ENCODE measurements at regions of chr15 and their contacts with region 1.

Region 1: GRCh38 chr15:70488002-70488605 is 275.3 kb downstream of the UACA start:
- DNase-seq: peak; percentile 68
- ATAC-seq: no peak
- H3K4me3 Mint-ChIP-seq: no peak overlapping the region
- H3K27ac Mint-ChIP-seq: peak overlapping the region; percentile 35
- H3K4me1 Mint-ChIP-seq: peaks cover 60% of the 10 kb centered on the region
- H3K27me3 Mint-ChIP-seq: no peaks in the 10 kb centered on the region
- CTCF ChIP-seq: peak; percentile 95

Region 2: DNA sequence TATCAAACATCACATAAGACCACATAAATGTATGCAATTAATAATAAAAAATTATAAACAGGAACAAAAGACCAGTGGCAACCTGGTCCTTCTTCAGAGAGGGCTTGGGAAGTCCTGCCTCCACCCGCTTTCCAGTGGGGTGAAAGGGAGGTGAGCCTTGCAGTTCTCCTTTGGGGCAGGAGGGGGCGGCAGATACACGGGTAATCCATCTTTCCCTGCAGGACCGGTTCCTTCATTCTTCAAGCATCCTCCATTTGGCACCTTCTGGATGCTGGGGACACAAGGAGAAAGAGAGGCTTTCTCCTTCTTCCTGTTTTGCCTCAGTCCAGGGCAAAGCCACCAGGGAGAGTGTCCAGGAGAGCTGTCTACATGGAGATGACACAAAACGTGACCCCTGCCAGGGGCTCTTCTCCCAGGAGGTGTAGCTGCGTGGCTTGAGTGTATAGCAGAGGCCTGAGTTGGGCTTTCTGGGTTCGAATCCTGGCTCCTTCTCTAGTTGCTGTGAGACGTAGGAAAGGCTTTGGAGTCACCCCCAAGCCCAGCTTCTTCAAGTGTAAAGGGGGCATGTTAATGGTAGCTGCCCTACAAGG is 1012.2 kb before region 1 on chr15:
- CTCF ChIA-PET with region 1: interaction called, 5 read pairs
- POLR2A ChIA-PET with region 1: interaction called, 4 read pairs
- intact Hi-C with region 1: loop called (anchors 1 kb)
- DNase-seq: peak; percentile 65
- ATAC-seq: peak; percentile 88
- H3K4me3 Mint-ChIP-seq: no peak overlapping the region
- H3K27ac Mint-ChIP-seq: no peak overlapping the region
- H3K4me1 Mint-ChIP-seq: peaks cover 3% of the 10 kb centered on the region
- H3K27me3 Mint-ChIP-seq: peaks cover 6% of the 10 kb centered on the region
- CTCF ChIP-seq: no peak

Region 3: DNA sequence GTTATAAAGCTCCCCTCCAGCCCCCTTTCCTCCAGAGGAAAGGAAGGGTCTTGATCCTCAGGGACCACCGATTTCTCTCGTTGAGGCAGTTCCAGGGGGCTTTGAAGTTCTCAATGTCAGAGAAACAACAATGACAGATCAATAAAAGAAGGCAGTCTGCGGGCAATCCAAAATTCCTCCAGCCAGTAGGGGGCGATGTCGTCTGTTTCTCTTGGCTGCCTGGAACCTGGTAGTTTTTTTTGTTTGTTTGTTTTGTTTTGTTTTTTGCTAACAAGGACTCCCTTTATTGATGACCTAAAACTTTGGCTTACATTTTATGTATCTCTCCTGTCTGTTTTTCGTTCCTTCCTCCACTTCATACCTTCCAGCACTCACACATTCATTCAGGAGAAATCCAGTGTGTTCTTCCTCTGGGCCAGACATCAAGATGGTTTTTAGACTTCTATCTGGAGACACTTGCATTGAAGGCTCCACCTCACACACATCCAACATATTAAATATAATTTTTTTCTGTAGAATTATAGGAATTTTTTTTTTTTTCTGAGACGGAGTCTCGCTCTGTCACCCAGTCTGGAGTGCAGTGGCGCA is 758.8 kb before region 1 on chr15:
- CTCF ChIA-PET with region 1: no interaction called
- POLR2A ChIA-PET with region 1: no interaction called
- intact Hi-C with region 1: loop called (anchors 1 kb)
- DNase-seq: peak; percentile 49
- ATAC-seq: no peak
- H3K4me3 Mint-ChIP-seq: no peak overlapping the region
- H3K27ac Mint-ChIP-seq: no peak overlapping the region
- H3K4me1 Mint-ChIP-seq: peaks cover 18% of the 10 kb centered on the region
- H3K27me3 Mint-ChIP-seq: peaks cover 3% of the 10 kb centered on the region
- CTCF ChIP-seq: peak; percentile 73

Region 4: GRCh38 chr15:70036585-70037291 is 451.4 kb before region 1 on chr15:
- CTCF ChIA-PET with region 1: no interaction called
- POLR2A ChIA-PET with region 1: no interaction called
- intact Hi-C with region 1: loop called (anchors 5 kb)
- DNase-seq: no peak
- ATAC-seq: peak; percentile 55
- H3K4me3 Mint-ChIP-seq: peak overlapping the region; percentile 76
- H3K27ac Mint-ChIP-seq: peak overlapping the region; percentile 91
- H3K4me1 Mint-ChIP-seq: peaks cover 67% of the 10 kb centered on the region
- H3K27me3 Mint-ChIP-seq: no peaks in the 10 kb centered on the region
- CTCF ChIP-seq: no peak

Region 5: DNA sequence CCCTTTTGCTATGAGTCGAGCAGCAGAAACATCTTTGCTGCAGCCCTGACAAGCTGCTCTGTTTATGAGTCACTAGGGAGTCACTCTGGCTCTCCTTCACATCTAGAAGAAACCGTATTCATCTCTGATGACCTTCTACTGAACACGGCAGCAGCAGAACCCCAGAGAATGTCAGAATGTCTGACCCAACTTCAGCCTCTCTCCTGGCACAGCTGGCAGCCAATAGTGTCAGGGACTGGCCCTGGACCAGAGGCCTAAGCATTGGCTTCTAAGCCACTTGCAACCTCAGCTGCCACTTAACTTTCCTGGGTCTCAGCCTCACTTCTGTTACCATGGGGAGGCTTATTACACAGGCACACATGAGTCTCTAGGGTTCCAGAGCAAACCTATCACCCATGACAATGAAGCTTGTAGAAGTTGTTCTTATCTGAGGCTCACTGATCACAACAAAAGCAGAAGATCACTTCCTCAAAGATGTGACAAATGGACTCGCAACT is 206.2 kb before region 1 on chr15:
- CTCF ChIA-PET with region 1: no interaction called
- POLR2A ChIA-PET with region 1: interaction called, 3 read pairs
- intact Hi-C with region 1: loop called (anchors 1 kb)
- DNase-seq: peak; percentile 53
- ATAC-seq: peak; percentile 88
- H3K4me3 Mint-ChIP-seq: peak overlapping the region; percentile 33
- H3K27ac Mint-ChIP-seq: peak overlapping the region; percentile 94
- H3K4me1 Mint-ChIP-seq: peaks cover 55% of the 10 kb centered on the region
- H3K27me3 Mint-ChIP-seq: no peaks in the 10 kb centered on the region
- CTCF ChIP-seq: no peak

Region 6: DNA sequence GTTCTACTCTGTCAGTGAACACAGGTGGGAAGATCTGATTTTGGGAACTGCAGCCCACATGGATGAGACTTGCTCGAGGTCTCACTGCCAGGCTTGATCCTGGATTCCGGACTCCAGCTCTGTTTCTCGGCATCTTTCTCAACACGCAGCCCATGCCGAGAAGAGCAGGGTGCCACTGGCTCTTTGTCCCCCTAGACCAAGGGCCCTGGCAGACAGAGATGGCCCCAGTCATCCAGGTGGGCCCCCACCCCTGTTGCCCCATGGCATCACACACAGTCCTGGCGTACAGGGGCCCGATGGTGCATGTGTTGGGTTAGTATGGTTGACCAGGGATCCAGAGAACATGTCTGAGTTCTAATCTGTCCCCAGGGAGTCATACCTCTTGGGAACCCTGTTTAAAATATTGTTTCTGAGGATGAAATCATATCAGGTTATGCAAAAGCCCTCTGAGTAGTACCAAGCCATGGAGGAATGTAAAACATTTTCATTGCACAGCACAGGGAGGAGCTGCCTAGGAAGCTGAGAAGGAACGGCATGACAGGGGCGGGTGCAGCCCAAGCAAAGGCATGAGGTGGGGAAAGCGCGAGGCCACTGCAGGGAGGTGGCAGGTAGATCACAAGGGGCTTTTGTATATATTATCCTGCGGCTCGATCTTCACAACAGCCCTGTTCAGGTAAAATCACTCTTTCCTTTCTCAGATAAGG is 45.3 kb before region 1 on chr15:
- CTCF ChIA-PET with region 1: no interaction called
- POLR2A ChIA-PET with region 1: no interaction called
- intact Hi-C with region 1: no loop called
- DNase-seq: no peak
- ATAC-seq: no peak
- H3K4me3 Mint-ChIP-seq: no peak overlapping the region
- H3K27ac Mint-ChIP-seq: no peak overlapping the region
- H3K4me1 Mint-ChIP-seq: peaks cover 10% of the 10 kb centered on the region
- H3K27me3 Mint-ChIP-seq: peaks cover 15% of the 10 kb centered on the region
- CTCF ChIP-seq: no peak

Region 7: GRCh38 chr15:70474471-70475396 is 13.4 kb before region 1 on chr15:
- CTCF ChIA-PET with region 1: interaction called, 5 read pairs
- POLR2A ChIA-PET with region 1: interaction called, 11 read pairs
- intact Hi-C with region 1: loop called (anchors 1 kb)
- DNase-seq: no peak
- ATAC-seq: peak; percentile 29
- H3K4me3 Mint-ChIP-seq: peak overlapping the region; percentile 70
- H3K27ac Mint-ChIP-seq: peak overlapping the region; percentile 65
- H3K4me1 Mint-ChIP-seq: peaks cover 39% of the 10 kb centered on the region
- H3K27me3 Mint-ChIP-seq: no peaks in the 10 kb centered on the region
- CTCF ChIP-seq: no peak

Region 8: DNA sequence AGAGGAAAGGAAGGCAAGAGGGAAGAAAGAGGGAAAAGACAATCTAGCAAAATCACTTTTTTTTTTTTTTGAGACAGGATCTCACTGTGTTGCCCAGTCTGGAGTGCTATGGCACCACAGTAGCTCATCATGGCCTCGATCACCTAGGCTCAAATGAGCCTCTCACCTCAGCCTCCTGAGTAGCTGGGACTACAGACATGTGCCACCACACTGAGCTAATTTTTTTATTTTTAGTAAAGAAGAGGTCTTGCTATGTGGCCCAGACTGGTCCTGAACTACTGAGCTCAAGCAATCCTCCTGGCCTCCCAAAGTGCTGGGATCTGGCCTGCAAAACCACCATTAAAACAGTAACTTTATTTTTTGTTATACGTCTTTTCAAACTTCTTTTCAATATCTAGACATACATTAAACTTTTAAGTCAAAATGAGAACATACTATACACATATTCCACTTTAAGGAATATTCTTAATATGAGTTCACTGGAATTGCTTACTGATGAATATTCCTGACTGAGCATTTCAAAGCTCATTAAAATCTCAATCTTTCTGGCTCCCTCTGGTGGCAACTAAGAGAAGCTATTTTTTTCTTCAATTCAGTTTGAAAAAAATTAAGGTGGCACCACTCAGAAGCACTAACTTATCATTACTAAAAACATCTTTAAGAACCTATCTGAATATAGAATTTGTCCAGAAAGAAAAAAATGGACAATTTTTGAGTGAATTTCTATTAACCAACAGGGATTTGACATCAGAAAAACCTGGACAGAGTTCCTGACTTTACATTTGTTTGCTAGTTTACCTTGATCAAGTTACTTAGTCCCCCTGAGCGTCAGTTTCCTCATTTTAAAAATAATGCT is 234.4 kb after region 1 on chr15:
- CTCF ChIA-PET with region 1: interaction called, 3 read pairs
- POLR2A ChIA-PET with region 1: no interaction called
- intact Hi-C with region 1: loop called (anchors 10 kb)
- DNase-seq: no peak
- ATAC-seq: no peak
- H3K4me3 Mint-ChIP-seq: no peak overlapping the region
- H3K27ac Mint-ChIP-seq: no peak overlapping the region
- H3K4me1 Mint-ChIP-seq: no peaks in the 10 kb centered on the region
- H3K27me3 Mint-ChIP-seq: peaks cover 9% of the 10 kb centered on the region
- CTCF ChIP-seq: peak; percentile 53